ENCODE measurements at regions of chr4 and their contacts with region 1.

Region 1: DNA sequence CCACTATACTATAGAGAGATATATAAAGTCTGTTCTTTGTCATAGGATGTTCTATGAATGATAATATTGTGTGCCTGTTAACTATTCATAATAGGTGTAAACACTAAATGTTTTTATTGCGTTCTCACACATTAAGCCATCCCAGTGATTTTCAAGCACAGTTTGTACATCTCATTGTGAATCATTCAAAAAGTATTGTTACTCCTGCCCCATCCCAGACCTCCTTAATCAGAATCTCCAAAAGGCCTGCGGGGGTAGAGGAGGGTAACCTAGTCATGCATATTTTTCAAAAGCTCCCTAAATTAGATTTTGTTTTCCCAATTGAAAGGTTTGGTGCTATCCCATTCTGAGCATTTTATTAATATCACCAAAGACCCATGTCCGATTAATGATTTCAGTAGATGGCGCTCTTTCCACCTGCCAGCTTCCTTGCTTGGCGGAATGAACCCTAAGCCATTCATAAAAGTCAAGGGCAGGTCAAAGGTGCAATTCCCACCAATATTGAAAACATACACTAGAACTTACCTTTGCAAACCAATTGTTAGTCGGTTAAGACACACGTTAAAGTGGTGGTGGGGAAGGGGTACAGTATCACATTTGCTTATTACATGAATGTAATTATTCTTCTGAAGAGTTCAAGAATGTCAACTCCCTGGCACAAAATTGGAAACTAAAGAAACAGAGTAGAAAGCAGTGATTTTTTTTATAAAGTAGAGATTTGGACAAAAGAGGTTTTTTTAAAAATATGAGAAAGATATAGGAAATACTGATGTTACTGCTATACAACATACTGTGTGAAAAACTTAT is 5.8 kb upstream of the TET2 start:
- DNase-seq: peak in 1 of 2 donors; percentile 73
- H3K4me3 ChIP-seq: no peak overlapping the region
- H3K27ac ChIP-seq: no peak overlapping the region
- H3K4me1 ChIP-seq: peaks cover 0 to 11% (median 6%) of the 10 kb centered on the region in 4 donors
- H3K27me3 ChIP-seq: no peaks in the 10 kb centered on the region
- CTCF ChIP-seq: peak in 5 of 7 experiments; percentile 28 to 59 (median 51)
- EP300 ChIP-seq: no peak
- POLR2A ChIP-seq: no peak

Region 2: DNA sequence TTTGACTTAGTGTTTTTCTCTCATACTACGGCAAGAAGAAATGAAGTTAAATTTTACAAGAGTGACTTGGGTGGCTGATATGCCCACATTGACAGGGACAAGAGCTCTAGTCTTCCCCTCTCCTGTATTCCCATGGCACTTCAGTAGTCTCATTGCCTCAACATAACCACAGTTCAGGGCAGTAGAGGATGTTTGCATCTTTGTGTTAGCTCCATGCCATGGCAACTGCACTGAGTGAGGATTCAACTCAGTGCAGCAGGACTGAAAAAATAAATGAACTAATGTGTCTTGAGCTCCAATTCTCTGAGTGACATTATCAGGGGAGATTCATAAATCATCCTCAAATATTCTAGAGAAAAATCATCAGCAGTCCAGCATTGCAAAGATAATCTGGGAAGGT is 84.6 kb after region 1 on chr4:
- intact Hi-C with region 1: no loop called
- DNase-seq: no peak
- H3K4me3 ChIP-seq: no peak overlapping the region
- H3K27ac ChIP-seq: no peak overlapping the region
- H3K4me1 ChIP-seq: peaks cover 0 to 13% (median 5%) of the 10 kb centered on the region in 4 donors
- H3K27me3 ChIP-seq: no peaks in the 10 kb centered on the region
- CTCF ChIP-seq: no peak
- EP300 ChIP-seq: no peak
- POLR2A ChIP-seq: no peak

Region 3: GRCh38 chr4:105274504-105274903 is 133.6 kb after region 1 on chr4:
- intact Hi-C with region 1: no loop called
- DNase-seq: no peak
- H3K4me3 ChIP-seq: no peak overlapping the region
- H3K27ac ChIP-seq: no peak overlapping the region
- H3K4me1 ChIP-seq: peaks cover 0 to 10% (median 0%) of the 10 kb centered on the region in 4 donors
- H3K27me3 ChIP-seq: no peaks in the 10 kb centered on the region
- CTCF ChIP-seq: no peak
- EP300 ChIP-seq: no peak
- POLR2A ChIP-seq: no peak

Region 4: DNA sequence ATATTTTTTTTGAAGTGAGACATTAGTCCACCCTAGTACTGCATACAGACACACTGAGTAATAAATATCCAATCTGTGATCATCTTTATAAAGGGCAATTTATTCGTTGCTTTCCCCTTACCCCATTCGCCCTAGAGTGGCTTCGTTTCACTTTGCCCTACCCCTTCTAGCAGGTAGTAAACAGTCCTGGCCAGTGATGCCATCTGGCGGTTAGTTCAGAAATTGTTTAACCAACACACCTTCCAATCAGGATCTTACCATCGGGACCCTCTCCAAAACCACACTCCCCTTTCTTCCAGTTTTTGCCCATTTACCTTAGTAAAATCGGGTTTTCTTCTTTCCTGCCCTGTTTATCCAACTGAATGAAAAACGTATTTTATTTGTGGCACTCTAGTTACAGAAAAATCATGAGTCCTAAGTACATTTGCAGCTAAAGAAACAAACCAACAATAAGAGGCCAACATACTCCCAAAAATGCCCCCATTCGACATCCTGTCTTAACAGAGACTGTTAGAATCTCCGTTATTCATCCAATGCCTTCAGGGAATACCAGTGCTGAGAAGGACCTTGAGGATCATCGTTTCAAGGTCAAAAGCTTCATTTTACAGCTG is 330.8 kb after region 1 on chr4:
- intact Hi-C with region 1: loop called (anchors 5 kb)
- DNase-seq: peak; percentile 74 to 93
- H3K4me3 ChIP-seq: peak overlapping the region in 3 of 4 donors; percentile 5 to 77 (median 70)
- H3K27ac ChIP-seq: peak overlapping the region in 3 of 5 donors; percentile 99 to 100 (median 99)
- H3K4me1 ChIP-seq: peaks cover 12 to 63% (median 41%) of the 10 kb centered on the region in 4 donors
- H3K27me3 ChIP-seq: no peaks in the 10 kb centered on the region
- CTCF ChIP-seq: peak in 5 of 7 experiments; percentile 42 to 75 (median 69)
- EP300 ChIP-seq: no peak
- POLR2A ChIP-seq: no peak

Measured in stomach (tissue), 19 donors.